Psoas muscle (tissue), 8 donors: ENCODE measurements at regions of chr17 and their contacts with region 1.

Region 1: GRCh38 chr17:16075956-16076355 is 76.3 kb downstream of the TTC19 start:
- DNase-seq: no peak
- ATAC-seq: no peak
- H3K4me3 ChIP-seq: no peak overlapping the region
- H3K27ac ChIP-seq: no peak overlapping the region
- H3K4me1 ChIP-seq: no peaks in the 10 kb centered on the region
- H3K27me3 ChIP-seq: no peaks in the 10 kb centered on the region
- CTCF ChIP-seq: no peak

Region 2: GRCh38 chr17:16040710-16041251 is 35.2 kb before region 1 on chr17:
- intact Hi-C with region 1: loop called in 1 of 2 experiments (anchors 1 kb)
- DNase-seq: no peak
- ATAC-seq: peak; percentile 9 to 39 (median 31)
- H3K4me3 ChIP-seq: no peak overlapping the region
- H3K27ac ChIP-seq: no peak overlapping the region
- H3K4me1 ChIP-seq: no peaks in the 10 kb centered on the region
- H3K27me3 ChIP-seq: no peaks in the 10 kb centered on the region
- CTCF ChIP-seq: no peak

Region 3: GRCh38 chr17:16117149-16117548 is 41.2 kb after region 1 on chr17:
- intact Hi-C with region 1: no loop called
- DNase-seq: no peak
- ATAC-seq: no peak
- H3K4me3 ChIP-seq: no peak overlapping the region
- H3K27ac ChIP-seq: no peak overlapping the region
- H3K4me1 ChIP-seq: peaks cover 1% of the 10 kb centered on the region
- H3K27me3 ChIP-seq: no peaks in the 10 kb centered on the region
- CTCF ChIP-seq: no peak